Psoas muscle (tissue), 8 donors: ENCODE measurements at regions of chrX and their contacts with region 1.

Region 1: GRCh38 chrX:106894392-106894909 is 8.7 kb downstream of the RIPPLY1 start:
- DNase-seq: peak; percentile 32 to 69
- ATAC-seq: peak; percentile 85 to 94 (median 87)
- H3K4me3 ChIP-seq: no peak overlapping the region
- H3K27ac ChIP-seq: no peak overlapping the region
- H3K4me1 ChIP-seq: no peaks in the 10 kb centered on the region
- H3K27me3 ChIP-seq: peaks cover 0 to 26% (median 0%) of the 10 kb centered on the region in 3 donors
- CTCF ChIP-seq: peak; percentile 83

Region 2: GRCh38 chrX:106599411-106599810 is 295.0 kb before region 1 on chrX:
- intact Hi-C with region 1: no loop called
- DNase-seq: no peak
- ATAC-seq: no peak
- H3K4me3 ChIP-seq: no peak overlapping the region
- H3K27ac ChIP-seq: no peak overlapping the region
- H3K4me1 ChIP-seq: no peaks in the 10 kb centered on the region
- H3K27me3 ChIP-seq: peaks cover 0 to 24% (median 0%) of the 10 kb centered on the region in 3 donors
- CTCF ChIP-seq: no peak

Region 3: DNA sequence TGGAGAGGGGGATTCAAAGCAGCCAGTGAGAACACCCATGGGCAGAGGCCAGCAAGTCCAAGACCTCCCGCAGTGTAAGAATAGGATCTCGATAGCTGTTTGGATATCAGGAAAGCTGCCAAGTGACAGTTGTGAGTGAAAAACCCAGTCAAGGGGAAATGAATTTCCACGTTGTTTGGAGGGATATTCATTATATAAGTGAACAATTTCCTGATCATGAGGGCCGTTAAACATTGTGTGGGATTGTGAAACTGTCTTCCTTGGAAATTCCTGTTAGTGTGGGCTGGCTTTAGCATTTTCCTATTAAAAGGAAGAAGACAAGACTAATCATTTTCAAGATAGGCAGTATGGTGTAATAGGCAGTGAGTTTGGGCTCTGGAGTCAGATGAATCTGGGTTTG is 40.7 kb after region 1 on chrX:
- intact Hi-C with region 1: loop called in 1 of 2 experiments (anchors 5 kb)
- DNase-seq: no peak
- ATAC-seq: no peak
- H3K4me3 ChIP-seq: no peak overlapping the region
- H3K27ac ChIP-seq: no peak overlapping the region
- H3K4me1 ChIP-seq: no peaks in the 10 kb centered on the region
- H3K27me3 ChIP-seq: peaks cover 0 to 19% (median 0%) of the 10 kb centered on the region in 3 donors
- CTCF ChIP-seq: no peak

Region 4: GRCh38 chrX:106952988-106953387 is 58.5 kb after region 1 on chrX:
- intact Hi-C with region 1: loop called (anchors 2 kb)
- DNase-seq: no peak
- ATAC-seq: peak in 2 of 4 donors; percentile 55 to 65
- H3K4me3 ChIP-seq: no peak overlapping the region
- H3K27ac ChIP-seq: no peak overlapping the region
- H3K4me1 ChIP-seq: no peaks in the 10 kb centered on the region
- H3K27me3 ChIP-seq: peaks cover 0 to 16% (median 0%) of the 10 kb centered on the region in 3 donors
- CTCF ChIP-seq: peak; percentile 47